Activated CD4-positive, alpha-beta memory T cell treated with anti-CD3 and anti-CD28 coated beads for 36 hours (primary cell): ENCODE measurements at regions of chr5 and their contacts with region 1.

Region 1: DNA sequence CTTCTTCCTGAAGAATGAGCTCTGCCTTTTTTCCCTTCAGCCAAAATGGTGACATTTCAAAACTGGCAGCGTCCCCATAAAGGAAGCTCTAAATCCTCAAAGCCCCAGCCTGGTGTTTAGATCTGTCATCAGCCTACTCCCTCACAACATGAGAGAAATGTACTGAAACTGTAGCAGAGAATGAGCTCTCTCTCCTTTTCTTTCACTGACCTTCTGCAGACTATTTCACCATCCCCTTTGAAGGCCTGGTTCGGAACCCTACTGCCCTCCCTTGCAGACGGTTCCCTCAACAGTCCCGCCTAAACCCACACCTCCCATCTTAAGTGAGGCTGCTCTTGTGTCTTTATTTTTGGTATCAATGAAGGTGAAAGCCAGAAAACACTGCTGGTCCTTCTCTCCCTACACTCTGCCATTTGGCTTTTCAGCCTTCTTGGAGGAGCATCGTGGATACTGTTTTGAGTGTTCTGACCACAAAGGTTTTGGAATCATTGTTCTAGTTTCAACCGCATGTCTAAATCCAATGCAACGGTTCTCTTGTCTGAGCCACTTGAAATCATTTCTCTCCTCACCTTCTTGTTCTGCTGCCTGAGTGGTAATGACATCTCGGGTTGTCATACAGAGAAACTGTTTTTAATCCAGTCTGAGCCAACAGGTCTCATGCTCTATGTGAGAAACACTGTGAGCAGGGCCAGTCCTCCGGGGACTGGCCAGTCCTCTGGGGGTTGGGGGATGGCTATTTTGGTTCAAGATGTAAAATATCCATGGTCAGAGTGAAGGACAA is 39.0 kb downstream of the ITK start:
- DNase-seq: peak; percentile 58
- H3K4me3 Mint-ChIP-seq: peak overlapping the region; percentile 58
- H3K27ac Mint-ChIP-seq: peak overlapping the region; percentile 98
- H3K4me1 Mint-ChIP-seq: peaks cover 86% of the 10 kb centered on the region
- H3K27me3 Mint-ChIP-seq: no peaks in the 10 kb centered on the region

Region 2: DNA sequence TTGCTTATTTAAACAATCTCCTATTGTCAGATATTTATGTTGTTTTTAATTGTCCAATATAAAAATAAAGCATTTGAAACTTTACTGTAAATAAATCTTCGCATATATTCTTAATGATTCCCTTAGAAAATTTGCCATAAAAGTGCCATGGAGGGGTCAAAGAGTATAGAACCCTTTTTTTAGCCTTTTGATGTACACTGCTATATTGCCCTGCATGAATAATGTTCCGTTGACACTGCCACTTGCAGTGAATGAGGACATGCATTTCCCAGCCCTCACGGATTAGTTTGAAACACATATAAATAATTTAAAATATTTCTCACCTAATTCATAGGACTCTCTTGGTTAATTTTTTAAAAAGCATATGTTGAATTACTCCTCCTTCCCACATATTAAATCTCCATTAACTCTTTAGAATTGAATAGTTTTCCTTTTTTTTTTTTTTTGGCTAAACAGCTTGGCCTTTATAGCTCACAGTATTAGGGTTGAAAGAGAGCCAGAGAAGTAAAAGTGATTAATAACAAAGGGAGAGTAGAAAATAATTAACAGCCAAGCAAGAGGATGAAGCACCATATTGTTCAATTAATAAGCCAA is 1022.5 kb before region 1 on chr5:
- CTCF ChIA-PET with region 1: no interaction called
- POLR2A ChIA-PET with region 1: no interaction called
- intact Hi-C with region 1: no loop called
- DNase-seq: no peak
- H3K4me3 Mint-ChIP-seq: no peak overlapping the region
- H3K27ac Mint-ChIP-seq: no peak overlapping the region
- H3K4me1 Mint-ChIP-seq: no peaks in the 10 kb centered on the region
- H3K27me3 Mint-ChIP-seq: no peaks in the 10 kb centered on the region

Region 3: DNA sequence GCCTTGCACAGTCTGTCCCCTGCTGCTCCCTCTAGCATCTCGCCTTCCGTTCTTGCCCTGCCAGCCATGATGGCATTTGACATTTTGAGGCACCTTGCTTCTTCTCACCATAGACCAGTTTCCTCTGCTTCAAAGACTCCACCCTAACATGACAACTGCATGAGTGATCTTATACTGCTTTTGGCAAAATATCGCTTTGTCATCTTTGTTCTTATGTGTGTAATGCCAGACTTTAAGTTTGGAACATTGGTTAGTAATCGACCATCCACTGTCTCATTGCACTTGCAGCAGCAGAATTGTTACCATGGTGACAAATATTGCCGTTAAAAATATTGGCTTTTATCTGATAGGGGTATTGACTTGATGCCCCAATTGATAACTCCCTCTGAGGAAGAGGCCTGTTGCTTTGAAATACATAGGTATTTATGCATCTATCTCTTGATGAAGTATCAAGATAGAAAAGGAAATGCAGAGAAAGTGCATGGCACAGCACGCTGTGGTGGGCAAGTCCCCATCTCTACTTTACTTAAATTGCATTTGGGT is 60.4 kb before region 1 on chr5:
- CTCF ChIA-PET with region 1: no interaction called
- POLR2A ChIA-PET with region 1: no interaction called
- intact Hi-C with region 1: loop called (anchors 1 kb)
- DNase-seq: peak; percentile 70
- H3K4me3 Mint-ChIP-seq: peak overlapping the region; percentile 72
- H3K27ac Mint-ChIP-seq: peak overlapping the region; percentile 98
- H3K4me1 Mint-ChIP-seq: peaks cover 82% of the 10 kb centered on the region
- H3K27me3 Mint-ChIP-seq: no peaks in the 10 kb centered on the region

Region 4: GRCh38 chr5:157180374-157181264 is 39.1 kb before region 1 on chr5 and contains the start of gene ITK:
- CTCF ChIA-PET with region 1: interaction called, 4 read pairs
- POLR2A ChIA-PET with region 1: interaction called, 368 read pairs
- intact Hi-C with region 1: loop called (anchors 1 kb)
- DNase-seq: peak; percentile 58
- H3K4me3 Mint-ChIP-seq: peak within 1 kb of the TSS; percentile 99
- H3K27ac Mint-ChIP-seq: peak within 1 kb of the TSS; percentile 100
- H3K4me1 Mint-ChIP-seq: peaks cover 45% of the 10 kb centered on the region
- H3K27me3 Mint-ChIP-seq: no peaks in the 10 kb centered on the region
- total RNA-seq, gene ITK: 236 to 240 TPM

Region 5: DNA sequence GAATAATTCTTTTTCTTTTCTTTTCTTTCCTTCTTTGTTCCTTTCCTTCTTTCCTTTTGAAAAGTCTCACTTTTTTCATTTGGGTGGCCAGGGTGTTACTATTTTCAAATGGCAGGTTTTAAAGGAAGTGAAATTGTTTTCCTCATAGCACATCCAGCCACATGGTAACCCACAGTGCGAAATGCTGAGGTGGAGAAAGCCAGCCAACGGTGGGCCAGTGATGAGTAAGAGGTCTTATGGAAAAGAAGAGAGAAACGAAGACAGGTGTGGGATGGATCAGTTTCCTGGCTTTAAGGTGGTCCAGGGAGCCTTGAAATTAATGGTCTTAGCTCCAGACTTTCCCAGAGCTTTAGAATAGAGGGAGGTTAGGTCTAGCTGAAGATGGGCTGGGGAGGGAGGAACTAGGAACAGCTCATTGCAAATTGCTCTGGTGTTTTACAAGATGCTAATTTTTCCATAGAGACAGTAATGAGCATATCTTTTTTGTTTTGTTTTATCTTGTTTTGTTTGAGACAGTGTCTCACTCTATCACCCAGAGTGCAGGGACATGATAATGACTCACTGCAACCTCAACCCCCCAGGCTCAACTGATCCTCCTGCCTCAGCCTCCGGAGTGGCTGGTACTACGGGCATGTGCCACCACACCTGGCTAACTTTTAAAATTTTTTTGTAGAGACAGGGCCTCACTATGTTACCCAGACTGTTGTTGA is 21.2 kb before region 1 on chr5:
- CTCF ChIA-PET with region 1: interaction called, 5 read pairs
- POLR2A ChIA-PET with region 1: interaction called, 368 read pairs
- intact Hi-C with region 1: loop called (anchors 1 kb)
- DNase-seq: peak; percentile 77
- H3K4me3 Mint-ChIP-seq: peak overlapping the region; percentile 53
- H3K27ac Mint-ChIP-seq: peak overlapping the region; percentile 95
- H3K4me1 Mint-ChIP-seq: peaks cover 94% of the 10 kb centered on the region
- H3K27me3 Mint-ChIP-seq: no peaks in the 10 kb centered on the region

Region 6: GRCh38 chr5:157247267-157247666 is 27.6 kb after region 1 on chr5:
- CTCF ChIA-PET with region 1: interaction called, 13 read pairs
- POLR2A ChIA-PET with region 1: interaction called, 9 read pairs
- intact Hi-C with region 1: loop called (anchors 1 kb)
- DNase-seq: peak; percentile 79
- H3K4me3 Mint-ChIP-seq: peak overlapping the region; percentile 6
- H3K27ac Mint-ChIP-seq: peak overlapping the region; percentile 89
- H3K4me1 Mint-ChIP-seq: peaks cover 91% of the 10 kb centered on the region
- H3K27me3 Mint-ChIP-seq: no peaks in the 10 kb centered on the region

Region 7: DNA sequence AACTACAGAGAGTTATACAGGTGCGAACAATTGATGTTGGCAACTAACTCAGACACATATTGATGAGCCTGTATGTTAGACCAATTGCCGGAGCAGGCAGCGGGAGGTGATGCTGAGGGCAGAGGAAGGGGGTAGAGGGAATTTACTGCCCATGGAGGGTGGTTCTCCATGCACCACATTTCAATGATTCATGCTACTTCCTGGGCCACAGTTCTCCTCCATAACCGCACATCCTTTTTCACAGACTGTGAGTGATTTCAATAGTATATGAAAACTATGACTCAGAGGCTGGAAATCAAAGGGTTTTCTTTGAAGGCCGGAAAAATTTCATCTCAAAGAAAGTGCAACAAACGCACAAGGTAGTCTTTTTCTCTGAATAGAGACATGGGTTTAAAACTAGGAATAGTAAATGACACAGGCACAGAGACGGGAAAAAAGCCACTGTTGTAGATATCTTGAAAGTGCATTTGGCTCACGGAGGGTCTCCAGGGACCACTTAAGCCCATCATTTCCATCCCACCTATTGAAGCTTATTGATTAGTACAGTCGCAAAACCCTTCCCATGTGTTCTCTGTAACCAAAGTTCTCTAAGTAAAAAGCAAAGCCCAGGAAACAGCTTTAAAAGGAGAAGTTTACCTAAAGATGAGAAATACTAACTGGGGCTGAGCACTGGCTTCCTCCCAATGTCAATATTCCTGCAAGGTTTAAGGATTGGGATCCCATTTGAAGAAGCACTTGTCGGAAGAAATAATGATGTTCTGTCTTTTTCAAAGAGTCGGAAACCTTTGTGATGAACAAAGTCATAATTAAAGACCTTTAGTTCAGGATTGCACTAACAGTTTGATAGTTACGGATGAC is 383.9 kb after region 1 on chr5:
- CTCF ChIA-PET with region 1: no interaction called
- POLR2A ChIA-PET with region 1: no interaction called
- intact Hi-C with region 1: loop called (anchors 2 kb)
- DNase-seq: peak; percentile 83
- H3K4me3 Mint-ChIP-seq: peak overlapping the region; percentile 18
- H3K27ac Mint-ChIP-seq: peak overlapping the region; percentile 90
- H3K4me1 Mint-ChIP-seq: peaks cover 93% of the 10 kb centered on the region
- H3K27me3 Mint-ChIP-seq: no peaks in the 10 kb centered on the region